Natural killer cell (primary cell): ENCODE measurements at regions of chr4 and their contacts with region 1.

Region 1: GRCh38 chr4:7067452-7068278 is at the start of gene GRPEL1:
- DNase-seq: peak; percentile 100
- ATAC-seq: peak; percentile 92 to 98 (median 93)
- H3K4me3 ChIP-seq: peak within 1 kb of the TSS; percentile 91
- H3K4me3 Mint-ChIP-seq: peak within 1 kb of the TSS; percentile 97
- H3K27ac ChIP-seq: peak within 1 kb of the TSS; percentile 78
- H3K27ac Mint-ChIP-seq: peak within 1 kb of the TSS; percentile 92 to 94
- H3K4me1 ChIP-seq: peaks cover 27% of the 10 kb centered on the region
- H3K4me1 Mint-ChIP-seq: peaks cover 27 to 44% of the 10 kb centered on the region in 2 donors
- H3K27me3 ChIP-seq: no peaks in the 10 kb centered on the region
- H3K27me3 Mint-ChIP-seq: peaks cover 3 to 10% of the 10 kb centered on the region in 2 donors
- CTCF ChIP-seq: no peak
- total RNA-seq, gene GRPEL1: 20.1 to 37.8 (median 36.8) TPM

Region 2: GRCh38 chr4:6716018-6716911 is 351.4 kb before region 1 on chr4 and contains the start of gene BLOC1S4:
- intact Hi-C with region 1: loop called (anchors 1 kb)
- DNase-seq: peak; percentile 88 to 99
- ATAC-seq: peak; percentile 84 to 94 (median 86)
- H3K4me3 ChIP-seq: peak within 1 kb of the TSS; percentile 81
- H3K4me3 Mint-ChIP-seq: peak within 1 kb of the TSS; percentile 98
- H3K27ac ChIP-seq: peak within 1 kb of the TSS; percentile 83
- H3K27ac Mint-ChIP-seq: peak within 1 kb of the TSS; percentile 98
- H3K4me1 ChIP-seq: peaks cover 27% of the 10 kb centered on the region
- H3K4me1 Mint-ChIP-seq: peaks cover 29 to 32% of the 10 kb centered on the region in 2 donors
- H3K27me3 ChIP-seq: no peaks in the 10 kb centered on the region
- H3K27me3 Mint-ChIP-seq: no peaks in the 10 kb centered on the region
- CTCF ChIP-seq: no peak
- total RNA-seq, gene BLOC1S4: 18.9 to 20.1 (median 20.0) TPM

Region 3: GRCh38 chr4:6783053-6783981 is 284.3 kb before region 1 on chr4:
- intact Hi-C with region 1: loop called (anchors 2 kb)
- DNase-seq: peak; percentile 87 to 92
- ATAC-seq: peak; percentile 76 to 90 (median 77)
- H3K4me3 ChIP-seq: peak overlapping the region; percentile 74
- H3K4me3 Mint-ChIP-seq: peak overlapping the region; percentile 90
- H3K27ac ChIP-seq: peak overlapping the region; percentile 97
- H3K27ac Mint-ChIP-seq: peak overlapping the region; percentile 84 to 88
- H3K4me1 ChIP-seq: peaks cover 25% of the 10 kb centered on the region
- H3K4me1 Mint-ChIP-seq: peaks cover 54 to 57% of the 10 kb centered on the region in 2 donors
- H3K27me3 ChIP-seq: no peaks in the 10 kb centered on the region
- H3K27me3 Mint-ChIP-seq: no peaks in the 10 kb centered on the region
- CTCF ChIP-seq: no peak

Region 4: DNA sequence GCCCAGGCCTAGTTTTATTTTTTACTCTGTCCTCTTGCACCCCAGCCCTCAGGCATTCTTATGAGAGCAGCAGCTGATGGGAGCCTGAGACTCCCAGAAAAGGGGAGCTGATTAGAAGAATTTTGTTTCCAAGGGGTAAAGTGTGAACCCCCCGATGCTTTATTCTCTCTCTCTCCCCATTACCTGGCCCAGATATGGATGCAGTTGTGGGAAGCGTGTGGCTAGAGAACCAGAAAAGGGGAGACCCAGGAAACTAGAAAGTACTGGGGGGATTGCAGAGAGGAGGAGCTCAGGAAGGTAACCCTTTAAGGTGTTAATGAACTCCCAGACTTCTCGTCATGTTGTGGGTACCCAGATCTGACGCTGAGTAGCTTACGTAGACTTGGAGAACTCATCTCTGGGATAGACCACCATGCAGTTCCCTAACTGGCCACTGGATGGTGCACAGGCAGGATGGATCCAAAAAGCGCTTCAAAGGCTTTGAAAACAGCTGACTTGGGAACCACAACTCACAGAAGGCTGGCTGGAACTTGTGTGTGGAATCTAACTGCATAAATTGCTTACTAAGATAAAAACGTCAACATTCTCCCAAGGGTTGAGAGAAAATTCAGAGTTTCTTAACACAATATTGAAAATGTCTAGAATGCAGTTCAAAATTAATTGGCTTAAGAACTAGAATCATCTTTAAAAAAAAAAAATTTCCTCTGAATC is 93.4 kb before region 1 on chr4:
- intact Hi-C with region 1: loop called (anchors 1 kb)
- DNase-seq: peak; percentile 70 to 91
- ATAC-seq: peak; percentile 93 to 100 (median 99)
- H3K4me3 ChIP-seq: no peak overlapping the region
- H3K4me3 Mint-ChIP-seq: no peak overlapping the region
- H3K27ac ChIP-seq: no peak overlapping the region
- H3K27ac Mint-ChIP-seq: peak overlapping the region; percentile 53 to 75
- H3K4me1 ChIP-seq: peaks cover 5% of the 10 kb centered on the region
- H3K4me1 Mint-ChIP-seq: peaks cover 20% of the 10 kb centered on the region in 2 donors
- H3K27me3 ChIP-seq: no peaks in the 10 kb centered on the region
- H3K27me3 Mint-ChIP-seq: no peaks in the 10 kb centered on the region
- CTCF ChIP-seq: peak; percentile 93

Region 5: DNA sequence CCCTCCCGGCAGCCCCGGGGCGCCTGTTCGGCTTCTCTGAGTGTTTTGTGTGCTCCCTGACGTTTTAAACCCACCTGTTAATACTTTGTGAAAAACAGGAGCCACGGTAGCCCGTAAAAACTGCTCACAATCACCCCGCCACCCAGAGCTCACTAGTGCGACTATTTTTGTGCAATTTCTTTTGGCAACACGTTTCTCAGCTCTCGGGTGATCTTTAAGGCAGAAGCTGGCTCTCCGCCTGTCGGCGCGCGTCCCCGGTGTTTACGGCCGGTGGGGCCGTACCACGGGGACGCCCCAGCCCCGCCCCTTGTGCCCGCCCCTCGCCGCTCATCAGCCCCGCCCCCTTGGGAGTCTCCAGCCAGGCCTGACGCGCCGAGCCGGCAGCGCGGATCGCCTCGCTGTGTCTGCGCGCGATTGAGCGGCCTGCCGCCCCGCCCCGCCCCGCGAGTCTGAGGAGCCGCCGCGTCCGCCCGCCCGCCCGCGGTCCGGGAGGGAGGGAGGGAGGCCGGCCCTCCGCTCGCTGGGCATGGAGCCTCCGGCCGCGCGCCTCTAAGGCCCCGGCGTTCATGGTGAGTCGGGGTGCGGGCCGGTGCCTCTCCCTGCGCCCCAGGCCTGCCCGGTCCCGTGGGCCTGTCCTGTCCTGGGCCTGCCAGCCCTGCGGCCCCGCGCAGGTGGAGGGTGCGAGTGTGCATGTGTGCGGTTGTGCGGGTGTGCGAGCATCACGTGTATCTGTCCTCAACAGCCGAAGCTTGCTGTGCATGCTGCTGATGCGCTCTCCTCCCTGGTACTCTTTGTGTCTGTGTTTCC is 80.7 kb before region 1 on chr4:
- intact Hi-C with region 1: loop called (anchors 1 kb)
- DNase-seq: peak; percentile 89 to 97
- ATAC-seq: peak; percentile 96 to 99 (median 96)
- H3K4me3 ChIP-seq: peak overlapping the region; percentile 63
- H3K4me3 Mint-ChIP-seq: peak overlapping the region; percentile 97
- H3K27ac ChIP-seq: peak overlapping the region; percentile 62
- H3K27ac Mint-ChIP-seq: peak overlapping the region; percentile 93 to 94
- H3K4me1 ChIP-seq: peaks cover 33% of the 10 kb centered on the region
- H3K4me1 Mint-ChIP-seq: peaks cover 61 to 65% of the 10 kb centered on the region in 2 donors
- H3K27me3 ChIP-seq: no peaks in the 10 kb centered on the region
- H3K27me3 Mint-ChIP-seq: no peaks in the 10 kb centered on the region
- CTCF ChIP-seq: no peak

Region 6: DNA sequence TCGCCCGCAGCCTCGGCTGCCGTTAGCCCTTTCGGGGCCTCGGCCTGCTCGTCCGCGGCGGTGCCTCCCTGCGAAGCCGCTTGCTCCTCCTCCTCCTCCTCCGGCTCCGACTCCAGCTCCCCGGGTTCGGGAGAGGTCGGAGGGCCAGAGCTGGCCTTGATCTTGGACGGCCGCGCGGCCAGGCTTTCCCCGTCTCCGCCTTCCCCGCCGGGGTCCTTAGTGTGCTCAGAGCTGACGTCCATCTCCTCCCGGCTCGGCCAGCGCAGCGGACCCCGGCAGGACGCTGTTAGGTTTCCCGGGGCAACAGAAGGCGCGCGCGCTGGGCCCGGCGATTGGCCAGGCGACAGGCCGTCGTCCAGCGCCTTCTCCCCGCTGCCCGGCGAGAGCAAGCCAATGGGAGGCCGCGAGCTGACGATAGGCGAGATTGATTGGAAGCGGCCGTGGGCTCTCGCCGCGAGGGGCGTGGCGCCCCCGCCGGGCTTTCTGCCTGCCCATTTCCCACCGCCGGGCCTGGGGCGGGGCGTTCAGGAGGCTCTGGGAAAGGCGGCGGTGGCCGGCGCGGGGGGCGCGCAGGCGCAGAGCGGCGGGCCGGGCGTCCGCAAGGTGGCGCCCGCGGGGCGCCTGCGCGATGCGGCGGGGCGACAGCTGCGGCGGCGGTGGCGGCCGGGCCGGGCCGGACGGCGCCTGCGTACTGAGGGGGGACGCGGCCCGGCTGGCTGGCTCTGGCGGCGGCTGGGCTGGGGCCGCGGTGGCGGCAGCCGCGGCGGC is 24.8 kb before region 1 on chr4 and contains the start of gene TADA2B:
- intact Hi-C with region 1: loop called (anchors 1 kb)
- DNase-seq: peak; percentile 90 to 95
- ATAC-seq: peak; percentile 76 to 91 (median 83)
- H3K4me3 ChIP-seq: peak within 1 kb of the TSS; percentile 85
- H3K4me3 Mint-ChIP-seq: peak within 1 kb of the TSS; percentile 95
- H3K27ac ChIP-seq: peak within 1 kb of the TSS; percentile 65
- H3K27ac Mint-ChIP-seq: peak within 1 kb of the TSS; percentile 84 to 95
- H3K4me1 ChIP-seq: peaks cover 51% of the 10 kb centered on the region
- H3K4me1 Mint-ChIP-seq: peaks cover 39 to 58% of the 10 kb centered on the region in 2 donors
- H3K27me3 ChIP-seq: no peaks in the 10 kb centered on the region
- H3K27me3 Mint-ChIP-seq: no peaks in the 10 kb centered on the region
- CTCF ChIP-seq: no peak
- total RNA-seq, gene TADA2B: 22.7 to 36.3 (median 35.9) TPM

Region 7: DNA sequence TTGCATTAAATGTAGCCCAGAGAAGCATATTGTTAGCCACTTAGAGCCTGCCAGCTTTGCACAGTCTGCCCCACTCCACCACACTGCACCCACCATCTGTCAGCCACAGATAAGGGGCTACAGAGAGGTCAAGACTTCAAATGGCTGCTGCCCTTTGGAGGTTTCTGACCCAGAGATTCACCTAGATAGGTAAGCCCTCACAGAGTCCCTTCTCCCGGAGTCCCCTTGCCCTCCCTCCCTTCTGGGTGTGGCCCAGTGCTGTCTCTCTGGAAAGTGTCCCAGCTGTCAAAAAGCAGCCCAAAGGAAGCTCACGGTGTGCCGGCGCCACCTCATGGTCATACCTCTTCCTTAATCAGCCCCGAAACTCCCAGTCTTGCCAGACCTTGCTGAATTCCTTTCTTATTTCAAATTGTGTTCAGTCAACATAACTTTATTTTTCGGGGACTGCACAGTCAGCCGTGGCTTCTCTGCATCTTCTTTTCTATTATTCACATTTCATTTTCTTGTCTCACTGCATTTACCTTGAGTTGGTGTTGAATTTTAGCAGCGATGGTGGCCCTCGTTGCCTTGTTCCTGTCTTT is 14.3 kb after region 1 on chr4:
- intact Hi-C with region 1: no loop called
- DNase-seq: peak in 1 of 2 donors; percentile 50
- ATAC-seq: peak in 1 of 3 donors; percentile 37
- H3K4me3 ChIP-seq: no peak overlapping the region
- H3K4me3 Mint-ChIP-seq: no peak overlapping the region
- H3K27ac ChIP-seq: no peak overlapping the region
- H3K27ac Mint-ChIP-seq: no peak overlapping the region
- H3K4me1 ChIP-seq: no peaks in the 10 kb centered on the region
- H3K4me1 Mint-ChIP-seq: no peaks in the 10 kb centered on the region
- H3K27me3 ChIP-seq: peaks cover 19% of the 10 kb centered on the region
- H3K27me3 Mint-ChIP-seq: peaks cover 45 to 50% of the 10 kb centered on the region in 2 donors
- CTCF ChIP-seq: no peak

Region 8: GRCh38 chr4:7124689-7125442 is 57.2 kb after region 1 on chr4:
- intact Hi-C with region 1: no loop called
- DNase-seq: no peak
- ATAC-seq: no peak
- H3K4me3 ChIP-seq: no peak overlapping the region
- H3K4me3 Mint-ChIP-seq: no peak overlapping the region
- H3K27ac ChIP-seq: no peak overlapping the region
- H3K27ac Mint-ChIP-seq: no peak overlapping the region
- H3K4me1 ChIP-seq: no peaks in the 10 kb centered on the region
- H3K4me1 Mint-ChIP-seq: no peaks in the 10 kb centered on the region
- H3K27me3 ChIP-seq: no peaks in the 10 kb centered on the region
- H3K27me3 Mint-ChIP-seq: peaks cover 0 to 9% of the 10 kb centered on the region in 2 donors
- CTCF ChIP-seq: no peak